PC-9 (cell line): ENCODE measurements at regions of chr2 and their contacts with region 1.

Region 1: GRCh38 chr2:30273261-30273861 is 42.0 kb downstream of the LBH start:
- DNase-seq: peak; percentile 77 to 91
- H3K4me3 ChIP-seq: peak overlapping the region; percentile 15; the same call in 1 of the 2 replicates
- H3K27ac ChIP-seq: peak overlapping the region; percentile 68
- H3K4me1 ChIP-seq: peaks cover 57% of the 10 kb centered on the region
- H3K27me3 ChIP-seq: no peaks in the 10 kb centered on the region
- CTCF ChIP-seq: no peak

Region 2: DNA sequence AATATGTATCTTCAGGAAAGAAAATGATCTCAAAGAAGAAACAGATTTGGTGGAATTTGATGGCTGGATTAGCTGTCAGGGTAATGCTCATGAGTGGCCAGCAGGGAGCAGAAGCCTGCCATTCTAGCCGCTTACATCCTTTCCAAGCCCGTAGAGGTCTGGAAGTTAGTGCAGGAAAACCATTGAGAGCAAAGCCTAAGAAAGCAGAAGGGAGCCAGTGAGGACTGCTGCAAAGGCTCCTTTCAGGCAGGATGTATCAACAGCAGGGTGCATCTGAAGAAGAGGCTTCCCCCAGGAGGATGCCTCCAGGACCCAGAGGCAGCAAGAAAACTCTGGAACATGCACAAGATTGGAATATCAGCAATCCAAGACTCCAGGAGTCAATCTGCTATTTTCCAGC is 64.9 kb before region 1 on chr2:
- CTCF ChIA-PET with region 1: no interaction called
- POLR2A ChIA-PET with region 1: no interaction called
- intact Hi-C with region 1: loop called (anchors 2 kb)
- DNase-seq: peak; percentile 56 to 59
- H3K4me3 ChIP-seq: no peak overlapping the region
- H3K27ac ChIP-seq: no peak overlapping the region
- H3K4me1 ChIP-seq: no peaks in the 10 kb centered on the region
- H3K27me3 ChIP-seq: no peaks in the 10 kb centered on the region
- CTCF ChIP-seq: peak; percentile 97

Region 3: GRCh38 chr2:30252723-30253701 is 20.3 kb before region 1 on chr2:
- CTCF ChIA-PET with region 1: no interaction called
- POLR2A ChIA-PET with region 1: interaction called, 3 read pairs
- intact Hi-C with region 1: loop called (anchors 1 kb)
- DNase-seq: peak; percentile 61 to 87
- H3K4me3 ChIP-seq: no peak overlapping the region
- H3K27ac ChIP-seq: peak overlapping the region; percentile 21; the same call in 1 of the 2 replicates
- H3K4me1 ChIP-seq: peaks cover 21% of the 10 kb centered on the region
- H3K27me3 ChIP-seq: no peaks in the 10 kb centered on the region
- CTCF ChIP-seq: no peak

Region 4: GRCh38 chr2:30447149-30448045 is 174.0 kb after region 1 on chr2 and contains the start of gene LCLAT1:
- CTCF ChIA-PET with region 1: no interaction called
- POLR2A ChIA-PET with region 1: interaction called, 5 read pairs
- intact Hi-C with region 1: loop called (anchors 1 kb)
- DNase-seq: peak; percentile 56 to 74
- H3K4me3 ChIP-seq: peak within 1 kb of the TSS; percentile 89
- H3K27ac ChIP-seq: peak within 1 kb of the TSS; percentile 53
- H3K4me1 ChIP-seq: peaks cover 23% of the 10 kb centered on the region
- H3K27me3 ChIP-seq: no peaks in the 10 kb centered on the region
- CTCF ChIP-seq: no peak
- total RNA-seq, gene LCLAT1: 21.9 and 35.7 TPM in 2 replicates